ENCODE measurements at regions of chr16 and their contacts with region 1.

Region 1: DNA sequence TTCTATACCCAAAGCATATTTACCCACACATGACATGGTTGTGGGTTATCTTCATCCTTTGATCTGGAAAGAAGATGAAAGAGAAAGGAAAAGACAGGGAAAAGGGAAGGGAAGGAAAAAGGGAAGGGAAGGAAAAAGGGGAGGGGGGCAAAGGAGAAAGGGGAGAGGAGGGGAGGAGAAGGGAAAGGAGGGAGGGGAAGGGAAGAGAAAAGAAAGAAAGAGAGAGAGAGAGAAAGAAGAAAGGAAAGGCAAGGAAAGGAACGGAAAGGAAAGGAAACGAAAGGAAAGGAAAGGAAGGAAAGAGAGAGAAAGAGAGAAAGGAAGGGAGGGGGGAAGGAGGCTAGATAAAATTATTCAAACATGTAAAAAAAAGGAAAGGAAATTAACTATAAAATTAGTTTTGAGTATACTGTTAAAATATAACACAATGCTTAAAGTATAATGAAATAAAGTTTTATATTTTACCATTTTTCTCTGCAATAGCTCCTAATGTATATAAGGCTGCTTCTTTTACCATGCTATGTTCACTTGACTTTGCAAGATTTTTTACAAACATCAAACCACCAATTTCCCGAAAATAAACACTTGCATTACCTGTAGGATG is 11.2 kb downstream of the TERB1 start:
- DNase-seq: no peak
- ATAC-seq: no peak
- H3K4me3 ChIP-seq: no peak overlapping the region
- H3K27ac ChIP-seq: no peak overlapping the region
- H3K4me1 ChIP-seq: no peaks in the 10 kb centered on the region
- H3K27me3 ChIP-seq: no peaks in the 10 kb centered on the region; the same call in 1 of the 2 replicates
- CTCF ChIP-seq: no peak
- POLR2A ChIP-seq: no peak
- RAD21 ChIP-seq: no peak

Region 2: GRCh38 chr16:66758086-66758485 is 32.1 kb before region 1 on chr16:
- CTCF ChIA-PET with region 1: no interaction called
- POLR2A ChIA-PET with region 1: no interaction called
- dilution Hi-C with region 1: no loop called
- in situ Hi-C with region 1: no loop called
- intact Hi-C with region 1: loop called (anchors 5 kb)
- DNase-seq: no peak
- ATAC-seq: no peak
- H3K4me3 ChIP-seq: no peak overlapping the region
- H3K27ac ChIP-seq: no peak overlapping the region
- H3K4me1 ChIP-seq: no peaks in the 10 kb centered on the region
- H3K27me3 ChIP-seq: peaks cover 16% of the 10 kb centered on the region
- CTCF ChIP-seq: no peak
- POLR2A ChIP-seq: no peak
- RAD21 ChIP-seq: no peak

Region 3: GRCh38 chr16:68166264-68166663 is 1376.0 kb after region 1 on chr16:
- CTCF ChIA-PET with region 1: no interaction called
- POLR2A ChIA-PET with region 1: no interaction called
- dilution Hi-C with region 1: no loop called
- in situ Hi-C with region 1: no loop called
- intact Hi-C with region 1: no loop called
- DNase-seq: no peak
- ATAC-seq: no peak
- H3K4me3 ChIP-seq: no peak overlapping the region
- H3K27ac ChIP-seq: no peak overlapping the region
- H3K4me1 ChIP-seq: no peaks in the 10 kb centered on the region
- H3K27me3 ChIP-seq: no peaks in the 10 kb centered on the region
- CTCF ChIP-seq: no peak
- POLR2A ChIP-seq: no peak
- RAD21 ChIP-seq: no peak

Measured in IMR-90 (cell line).